ENCODE measurements at regions of chr1 and their contacts with region 1.

Region 1: DNA sequence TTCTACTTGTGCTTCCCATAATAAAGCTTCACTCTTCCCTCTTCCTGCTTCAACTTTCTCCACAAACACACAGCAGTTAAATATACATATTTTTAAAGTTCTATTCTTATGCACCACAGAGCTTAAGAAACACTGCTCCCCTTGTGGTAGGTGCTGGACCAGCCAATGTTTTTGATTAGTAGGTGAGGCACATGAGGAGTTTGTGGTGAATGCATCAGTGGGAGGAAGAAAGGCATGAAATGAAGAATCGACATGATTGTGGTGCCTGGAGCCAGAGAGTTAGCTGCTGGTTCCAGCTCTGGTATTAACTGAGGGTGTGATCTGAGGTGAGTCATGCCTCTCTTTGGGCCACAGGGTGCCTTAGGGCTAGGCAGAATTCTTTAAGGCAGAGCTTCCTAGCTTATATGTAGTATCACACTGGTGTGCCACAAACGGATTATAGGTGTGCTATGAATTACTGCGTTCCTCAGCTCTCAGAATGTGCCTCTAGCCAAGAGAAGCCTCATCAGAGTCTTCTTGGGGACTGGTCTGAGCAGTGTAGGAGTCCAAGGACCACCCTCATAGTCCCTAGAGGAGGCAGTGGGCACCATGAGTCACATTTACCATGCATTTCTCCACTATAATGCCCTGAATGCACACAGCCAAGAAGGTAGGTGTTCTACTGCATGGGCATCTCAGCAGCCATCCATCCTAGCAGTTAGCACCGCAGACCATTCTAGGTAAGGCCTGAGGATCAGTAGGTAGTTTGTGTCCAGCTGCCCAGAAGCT is 97.4 kb upstream of the SGIP1 start:
- DNase-seq: peak; percentile 81
- H3K4me3 Mint-ChIP-seq: no peak overlapping the region
- H3K27ac Mint-ChIP-seq: no peak overlapping the region
- H3K4me1 Mint-ChIP-seq: peaks cover 40% of the 10 kb centered on the region
- H3K27me3 Mint-ChIP-seq: peaks cover 2% of the 10 kb centered on the region

Region 2: GRCh38 chr1:66182551-66183178 is 253.9 kb before region 1 on chr1:
- CTCF ChIA-PET with region 1: no interaction called
- intact Hi-C with region 1: loop called (anchors 2 kb)
- DNase-seq: peak; percentile 79
- H3K4me3 Mint-ChIP-seq: no peak overlapping the region
- H3K27ac Mint-ChIP-seq: peak overlapping the region; percentile 13
- H3K4me1 Mint-ChIP-seq: peaks cover 33% of the 10 kb centered on the region
- H3K27me3 Mint-ChIP-seq: no peaks in the 10 kb centered on the region

Region 3: DNA sequence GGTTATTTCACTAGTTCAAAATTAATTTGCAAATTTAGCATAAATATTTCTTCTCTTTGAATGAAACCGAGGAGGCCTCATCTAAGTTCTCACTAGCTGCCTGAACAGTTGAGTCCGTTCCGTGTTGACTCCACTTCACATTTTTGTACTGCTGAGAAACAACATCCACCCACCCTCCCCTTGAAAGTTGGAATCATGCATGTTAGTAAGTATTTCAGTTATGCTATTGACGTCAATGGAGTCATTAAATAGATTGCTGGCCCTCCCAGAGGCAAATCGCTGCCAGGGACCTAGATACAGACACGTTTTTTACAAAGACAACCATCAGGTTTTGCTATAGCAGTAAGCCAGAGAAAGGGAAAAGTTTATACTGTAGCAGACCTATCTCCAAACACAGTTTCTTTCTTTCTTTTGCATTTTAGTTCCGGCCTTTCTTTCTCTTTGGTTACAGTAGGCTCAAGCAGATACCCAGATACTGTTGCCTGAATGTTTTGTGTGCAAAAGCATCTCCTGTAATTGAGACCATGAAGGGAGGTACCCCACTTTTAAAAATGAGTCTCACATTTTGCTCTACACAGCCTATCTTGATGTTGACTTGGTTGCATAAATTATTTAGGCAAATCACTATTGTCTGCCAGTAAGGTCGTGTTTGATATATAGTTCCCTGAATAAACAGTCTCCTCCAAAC is 165.2 kb before region 1 on chr1:
- CTCF ChIA-PET with region 1: no interaction called
- intact Hi-C with region 1: loop called (anchors 1 kb)
- DNase-seq: peak; percentile 84
- H3K4me3 Mint-ChIP-seq: peak overlapping the region; percentile 54
- H3K27ac Mint-ChIP-seq: peak overlapping the region; percentile 90
- H3K4me1 Mint-ChIP-seq: peaks cover 74% of the 10 kb centered on the region
- H3K27me3 Mint-ChIP-seq: no peaks in the 10 kb centered on the region

Region 4: GRCh38 chr1:66360285-66360724 is 76.3 kb before region 1 on chr1:
- CTCF ChIA-PET with region 1: interaction called, 18 read pairs
- intact Hi-C with region 1: loop called (anchors 1 kb)
- DNase-seq: no peak
- H3K4me3 Mint-ChIP-seq: no peak overlapping the region
- H3K27ac Mint-ChIP-seq: no peak overlapping the region
- H3K4me1 Mint-ChIP-seq: peaks cover 73% of the 10 kb centered on the region
- H3K27me3 Mint-ChIP-seq: no peaks in the 10 kb centered on the region

Region 5: DNA sequence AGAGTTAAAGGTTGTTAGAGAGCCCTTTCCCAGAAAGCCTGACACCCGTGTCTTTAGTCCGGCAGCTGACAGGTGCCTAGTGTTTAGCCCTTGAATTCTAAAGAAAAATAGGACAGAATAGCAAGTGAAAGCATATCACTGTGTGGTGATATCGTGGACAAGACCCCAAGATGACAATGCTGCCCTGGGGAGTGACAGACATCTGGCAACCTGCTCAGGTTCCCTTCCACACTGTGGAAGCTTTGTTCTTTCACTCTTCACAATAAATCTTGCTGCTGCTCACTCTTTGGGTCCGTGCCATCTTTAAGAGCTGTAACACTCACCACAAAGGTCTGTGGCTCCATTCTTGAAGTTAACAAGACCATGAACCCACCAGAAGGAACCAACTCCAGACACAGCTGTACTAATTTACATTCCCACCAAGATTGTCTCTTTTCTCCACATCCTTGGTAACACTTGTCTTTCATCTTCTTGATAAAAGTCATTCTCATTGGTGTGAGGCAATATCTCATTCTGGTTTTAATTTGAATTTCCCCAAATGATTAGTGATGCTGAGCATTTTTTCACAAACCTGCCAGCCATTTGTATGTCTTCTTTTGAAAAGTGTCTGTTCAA is 10.2 kb before region 1 on chr1:
- CTCF ChIA-PET with region 1: interaction called, 12 read pairs
- intact Hi-C with region 1: no loop called
- DNase-seq: no peak
- H3K4me3 Mint-ChIP-seq: no peak overlapping the region
- H3K27ac Mint-ChIP-seq: no peak overlapping the region
- H3K4me1 Mint-ChIP-seq: peaks cover 14% of the 10 kb centered on the region
- H3K27me3 Mint-ChIP-seq: no peaks in the 10 kb centered on the region

Region 6: DNA sequence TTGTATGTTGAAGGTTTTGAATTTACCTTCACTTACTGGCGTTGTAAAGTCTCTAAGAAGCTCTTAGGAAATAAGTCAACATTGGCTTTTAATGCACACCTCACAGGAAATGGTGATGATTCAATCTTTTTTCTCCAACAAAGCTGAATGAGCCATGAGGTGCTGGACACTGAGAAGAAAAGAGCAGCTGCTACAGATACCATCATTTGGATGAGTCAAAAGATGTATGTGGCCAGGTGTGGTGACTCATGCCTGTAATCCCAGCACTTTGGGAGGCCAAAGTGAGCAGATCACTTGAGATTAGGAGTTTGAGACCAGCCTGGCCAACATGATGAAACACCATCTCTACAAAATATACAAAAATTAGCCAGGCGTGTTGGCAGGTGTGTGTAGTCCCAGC is 726.4 kb after region 1 on chr1:
- CTCF ChIA-PET with region 1: no interaction called
- intact Hi-C with region 1: loop called (anchors 10 kb)
- DNase-seq: peak; percentile 76
- H3K4me3 Mint-ChIP-seq: peak overlapping the region; percentile 42
- H3K27ac Mint-ChIP-seq: peak overlapping the region; percentile 83
- H3K4me1 Mint-ChIP-seq: peaks cover 63% of the 10 kb centered on the region
- H3K27me3 Mint-ChIP-seq: no peaks in the 10 kb centered on the region